Left ventricle myocardium superior (tissue), 1 donor: ENCODE measurements at regions of chr6 and their contacts with region 1.

Region 1: GRCh38 chr6:138428944-138429598 is 25.0 kb downstream of the HEBP2 start:
- DNase-seq: no peak
- ATAC-seq: peak; percentile 48

Region 2: GRCh38 chr6:138455746-138456400 is 26.8 kb after region 1 on chr6:
- intact Hi-C with region 1: no loop called
- DNase-seq: no peak
- ATAC-seq: no peak

Region 3: DNA sequence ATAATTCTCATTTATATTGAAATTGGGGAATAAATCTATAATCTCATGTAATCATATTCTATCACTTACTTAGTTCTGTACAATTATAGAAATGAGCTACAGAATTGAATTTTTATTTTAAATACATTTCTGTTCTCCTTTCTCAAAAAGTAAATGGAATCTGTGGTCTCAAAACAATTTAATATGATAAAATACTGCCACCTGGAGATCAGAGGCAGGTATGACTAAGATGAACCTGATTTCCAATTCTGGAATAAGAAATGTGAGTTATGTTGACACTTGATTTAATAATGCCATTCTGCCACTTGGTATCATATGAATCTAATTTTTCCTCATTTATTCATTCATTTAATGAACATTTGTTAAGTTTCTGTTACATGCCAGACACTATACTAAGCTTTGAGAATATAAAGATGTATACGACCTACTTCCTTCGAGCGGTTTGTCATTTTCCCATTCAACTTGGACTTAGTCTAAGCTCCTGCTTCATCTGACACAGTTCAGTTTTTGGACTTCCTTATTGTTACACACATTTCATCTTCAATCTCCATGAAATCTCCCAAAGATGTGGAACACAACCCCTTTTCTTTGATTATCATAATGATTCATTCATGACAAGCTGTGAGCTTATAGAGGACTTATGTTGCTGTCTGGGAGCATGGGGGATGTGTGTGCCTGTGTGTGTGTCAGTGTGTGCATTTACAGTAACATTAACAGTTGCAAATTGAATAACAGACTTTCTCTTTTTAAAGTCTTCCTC is 337.0 kb after region 1 on chr6:
- intact Hi-C with region 1: loop called (anchors 10 kb)
- DNase-seq: no peak
- ATAC-seq: no peak